SK-N-SH (cell line): ENCODE measurements at regions of chr9 and their contacts with region 1.

Region 1: DNA sequence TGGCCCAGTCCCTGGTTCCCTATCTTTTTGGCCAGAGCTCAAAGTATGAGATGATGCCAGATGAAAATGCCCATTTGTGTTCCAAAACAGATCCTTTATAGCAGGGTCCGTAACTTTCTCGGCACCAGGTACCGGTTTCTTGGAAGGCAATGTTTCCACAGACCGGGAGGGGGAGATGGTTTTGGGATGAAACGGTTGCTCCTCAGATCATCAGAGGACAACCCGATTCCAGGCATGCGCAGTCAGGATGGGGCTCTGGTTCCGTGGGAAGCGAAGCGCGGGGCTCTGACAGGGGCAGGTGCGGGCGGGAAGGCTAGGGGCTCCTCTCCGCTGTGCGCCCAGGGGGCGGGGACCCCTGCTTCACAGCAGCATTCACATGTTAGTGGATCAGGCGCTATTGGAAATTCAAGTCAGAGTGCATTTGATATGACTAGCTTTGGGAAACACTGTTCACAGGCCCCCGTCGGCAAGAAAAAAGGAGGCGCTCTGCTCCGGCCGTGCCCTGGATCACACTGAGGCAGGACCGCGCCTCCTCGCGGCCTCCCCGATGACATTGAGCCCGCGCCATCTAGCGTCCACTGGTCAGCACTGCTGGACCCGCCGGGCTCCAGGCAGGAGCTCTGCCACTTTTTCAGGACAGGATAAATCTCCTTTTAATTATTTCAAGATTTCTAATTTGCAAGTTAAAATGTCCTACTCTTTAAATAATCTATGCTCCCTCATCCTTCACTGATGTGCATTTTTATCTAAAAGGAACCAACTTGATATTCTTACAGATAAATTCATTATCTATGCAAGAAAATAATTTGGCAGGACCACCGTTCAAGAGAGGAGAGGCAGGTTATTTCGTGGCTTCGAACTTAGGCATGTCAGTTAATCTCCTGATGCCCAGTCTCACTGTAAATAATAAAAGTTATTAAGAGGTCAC is 190.0 kb downstream of the FANCC start:
- DNase-seq: peak; percentile 84
- H3K4me3 ChIP-seq: peak overlapping the region in 1 of 2 experiments; percentile 47; a peak in 1 of 4 replicates
- H3K27ac ChIP-seq: peak overlapping the region in 1 of 2 experiments; percentile 69; a peak in 1 of 4 replicates
- H3K4me1 ChIP-seq: peaks cover 0 to 74% of the 10 kb centered on the region in 2 experiments; a peak in 2 of 4 replicates
- H3K27me3 ChIP-seq: no peaks in the 10 kb centered on the region
- CTCF ChIP-seq: peak; percentile 98
- EP300 ChIP-seq: no peak; a peak in 1 of 4 replicates
- RAD21 ChIP-seq: peak; percentile 88

Region 2: DNA sequence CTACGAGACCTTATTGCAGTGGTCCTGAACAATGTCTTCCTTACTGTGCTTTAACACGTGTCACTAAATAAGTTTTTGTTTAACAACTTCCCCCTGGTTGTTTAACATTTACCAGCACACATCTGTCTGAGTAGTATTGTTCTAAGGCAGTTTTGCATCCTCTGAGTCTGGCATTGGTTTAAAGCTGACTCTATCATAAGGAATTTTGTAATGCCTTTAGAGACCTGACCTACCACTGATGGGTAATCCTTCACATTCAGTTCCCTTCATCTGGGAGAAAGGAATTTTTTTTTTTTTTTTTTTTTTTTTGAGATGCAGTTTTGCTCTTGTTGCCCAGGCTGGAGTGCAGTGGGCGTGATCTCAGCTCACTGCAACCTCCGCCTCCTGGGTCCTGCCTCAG is 592.6 kb before region 1 on chr9:
- CTCF ChIA-PET with region 1: no interaction called
- POLR2A ChIA-PET with region 1: no interaction called
- DNase-seq: no peak
- H3K4me3 ChIP-seq: no peak overlapping the region
- H3K27ac ChIP-seq: no peak overlapping the region
- H3K4me1 ChIP-seq: no peaks in the 10 kb centered on the region
- H3K27me3 ChIP-seq: no peaks in the 10 kb centered on the region
- CTCF ChIP-seq: no peak
- EP300 ChIP-seq: no peak
- RAD21 ChIP-seq: no peak

Region 3: GRCh38 chr9:94703488-94704140 is 423.9 kb before region 1 on chr9:
- CTCF ChIA-PET with region 1: interaction called, 16 read pairs
- POLR2A ChIA-PET with region 1: no interaction called
- DNase-seq: no peak
- H3K4me3 ChIP-seq: no peak overlapping the region
- H3K27ac ChIP-seq: peak overlapping the region in 1 of 2 experiments; percentile 98; a peak in 2 of 4 replicates
- H3K4me1 ChIP-seq: peaks cover 0 to 22% of the 10 kb centered on the region in 2 experiments; a peak in 2 of 4 replicates
- H3K27me3 ChIP-seq: no peaks in the 10 kb centered on the region
- CTCF ChIP-seq: no peak
- EP300 ChIP-seq: no peak
- RAD21 ChIP-seq: no peak

Region 4: GRCh38 chr9:95025213-95026147 is 102.0 kb before region 1 on chr9:
- CTCF ChIA-PET with region 1: interaction called, 17 read pairs
- POLR2A ChIA-PET with region 1: no interaction called
- DNase-seq: peak; percentile 73
- H3K4me3 ChIP-seq: no peak overlapping the region
- H3K27ac ChIP-seq: peak overlapping the region; percentile 87 to 94
- H3K4me1 ChIP-seq: peaks cover 36 to 59% of the 10 kb centered on the region in 2 experiments
- H3K27me3 ChIP-seq: no peaks in the 10 kb centered on the region
- CTCF ChIP-seq: peak; percentile 53
- EP300 ChIP-seq: peak; percentile 60 to 75; a peak in 3 of 4 replicates
- RAD21 ChIP-seq: peak; percentile 47; the same call in 1 of the 2 replicates

Region 5: GRCh38 chr9:95110991-95111421 is 16.5 kb before region 1 on chr9:
- CTCF ChIA-PET with region 1: interaction called, 65 read pairs
- POLR2A ChIA-PET with region 1: no interaction called
- DNase-seq: no peak
- H3K4me3 ChIP-seq: no peak overlapping the region
- H3K27ac ChIP-seq: no peak overlapping the region; a peak in 1 of 4 replicates
- H3K4me1 ChIP-seq: peaks cover 0 to 2% of the 10 kb centered on the region in 2 experiments; a peak in 1 of 4 replicates
- H3K27me3 ChIP-seq: no peaks in the 10 kb centered on the region
- CTCF ChIP-seq: no peak
- EP300 ChIP-seq: no peak
- RAD21 ChIP-seq: no peak

Region 6: GRCh38 chr9:95268681-95269080 is 141.2 kb after region 1 on chr9:
- CTCF ChIA-PET with region 1: interaction called, 49 read pairs
- POLR2A ChIA-PET with region 1: no interaction called
- DNase-seq: peak; percentile 77
- H3K4me3 ChIP-seq: no peak overlapping the region
- H3K27ac ChIP-seq: peak overlapping the region in 1 of 2 experiments; percentile 75; a peak in 2 of 4 replicates
- H3K4me1 ChIP-seq: peaks cover 0 to 34% of the 10 kb centered on the region in 2 experiments; a peak in 2 of 4 replicates
- H3K27me3 ChIP-seq: no peaks in the 10 kb centered on the region
- CTCF ChIP-seq: peak; percentile 58
- EP300 ChIP-seq: peak in 1 of 2 experiments; percentile 97; a peak in 2 of 4 replicates
- RAD21 ChIP-seq: peak; percentile 96

Region 7: GRCh38 chr9:95317119-95317892 is 189.8 kb after region 1 on chr9 and contains the start of gene FANCC:
- CTCF ChIA-PET with region 1: no interaction called
- POLR2A ChIA-PET with region 1: no interaction called
- DNase-seq: peak; percentile 98
- H3K4me3 ChIP-seq: peak within 1 kb of the TSS; percentile 88 to 98
- H3K27ac ChIP-seq: peak within 1 kb of the TSS; percentile 98 to 99
- H3K4me1 ChIP-seq: peaks cover 7 to 9% of the 10 kb centered on the region in 2 experiments; a peak in 3 of 4 replicates
- H3K27me3 ChIP-seq: no peaks in the 10 kb centered on the region
- CTCF ChIP-seq: no peak
- EP300 ChIP-seq: peak in 1 of 2 experiments; percentile 32; a peak in 1 of 4 replicates
- RAD21 ChIP-seq: no peak
- polyA plus RNA-seq, gene FANCC: 3.5 and 4.5 TPM in 2 replicates

Region 8: DNA sequence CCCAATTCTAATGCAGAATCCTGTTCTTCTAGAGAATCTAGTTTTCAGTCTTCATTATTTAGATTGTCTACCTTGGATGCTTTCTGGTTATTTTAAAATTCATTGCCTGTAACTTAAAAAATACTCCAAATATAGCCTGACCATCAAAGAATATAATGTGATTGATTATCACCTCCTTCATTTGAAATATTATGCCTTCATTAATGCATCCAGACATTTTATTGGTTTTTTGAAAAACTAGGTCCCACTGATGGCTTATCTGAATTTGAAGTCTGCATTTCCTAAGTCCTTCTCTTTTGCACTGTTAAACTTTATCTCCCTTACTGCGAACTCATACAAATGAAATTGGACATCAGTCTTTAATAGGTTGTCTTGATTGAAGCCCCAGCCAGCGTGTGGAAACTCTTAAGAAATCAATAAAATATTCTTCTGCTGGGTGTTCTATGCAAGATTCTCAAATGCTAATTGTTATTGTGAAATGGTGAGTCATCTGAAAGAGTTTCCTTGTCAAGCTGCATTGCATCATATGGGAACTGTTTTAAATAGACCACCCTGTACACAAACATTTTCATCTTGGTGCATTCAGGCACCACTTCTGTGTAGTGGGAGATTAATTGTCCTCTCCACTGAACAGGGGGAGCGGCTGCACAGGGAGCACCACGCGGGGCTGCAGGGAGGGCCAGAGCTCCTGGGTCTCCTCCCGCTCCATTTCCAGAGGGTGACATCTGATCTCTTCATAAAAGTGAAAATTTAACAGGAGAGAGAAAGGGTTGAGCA is 282.3 kb after region 1 on chr9:
- CTCF ChIA-PET with region 1: no interaction called
- POLR2A ChIA-PET with region 1: no interaction called
- DNase-seq: no peak
- H3K4me3 ChIP-seq: no peak overlapping the region
- H3K27ac ChIP-seq: no peak overlapping the region
- H3K4me1 ChIP-seq: peaks cover 2 to 6% of the 10 kb centered on the region in 2 experiments; a peak in 2 of 4 replicates
- H3K27me3 ChIP-seq: no peaks in the 10 kb centered on the region
- CTCF ChIP-seq: no peak
- EP300 ChIP-seq: no peak
- RAD21 ChIP-seq: no peak

Region 9: GRCh38 chr9:95938724-95939123 is 811.2 kb after region 1 on chr9:
- CTCF ChIA-PET with region 1: no interaction called
- POLR2A ChIA-PET with region 1: no interaction called
- DNase-seq: no peak
- H3K4me3 ChIP-seq: no peak overlapping the region
- H3K27ac ChIP-seq: no peak overlapping the region
- H3K4me1 ChIP-seq: no peaks in the 10 kb centered on the region
- H3K27me3 ChIP-seq: no peaks in the 10 kb centered on the region
- CTCF ChIP-seq: peak; percentile 21; the same call in 1 of the 2 replicates
- EP300 ChIP-seq: no peak
- RAD21 ChIP-seq: no peak